ENCODE measurements at regions of chr12 and their contacts with region 1.

Region 1: DNA sequence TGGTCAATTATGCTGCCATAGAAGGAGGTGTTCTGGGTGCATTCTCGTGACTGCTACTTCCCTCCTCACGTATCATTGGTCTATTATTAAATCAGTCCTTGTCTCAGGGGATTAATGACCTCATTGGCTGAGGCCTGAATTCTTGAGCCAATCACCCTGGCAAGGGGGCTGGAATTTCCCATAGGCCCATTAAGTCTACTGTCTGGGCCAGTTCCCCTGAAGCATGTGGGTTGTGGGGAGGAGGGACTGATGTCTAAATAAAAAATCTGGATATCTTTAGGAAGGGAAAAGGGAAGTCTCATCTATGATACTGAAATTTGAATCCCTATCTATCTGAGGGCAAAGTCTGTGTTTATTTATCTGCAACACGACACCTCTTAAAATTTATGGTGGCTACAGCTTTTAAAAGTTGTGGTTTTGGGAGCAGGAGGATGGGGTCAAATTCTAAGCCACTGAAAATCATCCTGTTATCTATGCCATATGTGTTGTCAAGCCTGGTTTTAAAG is 71.9 kb downstream of the DYRK2 start:
- DNase-seq: peak; percentile 78
- ATAC-seq: peak; percentile 77
- H3K4me3 ChIP-seq: no peak overlapping the region
- H3K27ac ChIP-seq: no peak overlapping the region
- H3K4me1 ChIP-seq: peaks cover 30% of the 10 kb centered on the region
- H3K27me3 ChIP-seq: no peaks in the 10 kb centered on the region
- CTCF ChIP-seq: no peak

Region 2: GRCh38 chr12:67765776-67766767 is 45.7 kb after region 1 on chr12:
- CTCF ChIA-PET with region 1: no interaction called
- POLR2A ChIA-PET with region 1: interaction called, 4 read pairs
- intact Hi-C with region 1: loop called (anchors 2 kb)
- DNase-seq: peak; percentile 94
- ATAC-seq: peak; percentile 97
- H3K4me3 ChIP-seq: no peak overlapping the region
- H3K27ac ChIP-seq: peak overlapping the region; percentile 81
- H3K4me1 ChIP-seq: peaks cover 19% of the 10 kb centered on the region
- H3K27me3 ChIP-seq: no peaks in the 10 kb centered on the region
- CTCF ChIP-seq: no peak

Measured in PC-3 (cell line).